ENCODE measurements at regions of chr17 and their contacts with region 1.

Region 1: GRCh38 chr17:19766422-19767270 is 18.5 kb upstream of the ALDH3A1 start:
- DNase-seq: peak; percentile 77 to 84
- ATAC-seq: peak; percentile 89 to 95 (median 90)
- H3K4me3 ChIP-seq: no peak overlapping the region
- H3K27ac ChIP-seq: peak overlapping the region in 1 of 10 donors; percentile 3
- H3K4me1 ChIP-seq: peaks cover 0 to 11% (median 0%) of the 10 kb centered on the region in 9 donors
- H3K27me3 ChIP-seq: no peaks in the 10 kb centered on the region
- CTCF ChIP-seq: peak; percentile 80 to 99 (median 98)

Region 2: DNA sequence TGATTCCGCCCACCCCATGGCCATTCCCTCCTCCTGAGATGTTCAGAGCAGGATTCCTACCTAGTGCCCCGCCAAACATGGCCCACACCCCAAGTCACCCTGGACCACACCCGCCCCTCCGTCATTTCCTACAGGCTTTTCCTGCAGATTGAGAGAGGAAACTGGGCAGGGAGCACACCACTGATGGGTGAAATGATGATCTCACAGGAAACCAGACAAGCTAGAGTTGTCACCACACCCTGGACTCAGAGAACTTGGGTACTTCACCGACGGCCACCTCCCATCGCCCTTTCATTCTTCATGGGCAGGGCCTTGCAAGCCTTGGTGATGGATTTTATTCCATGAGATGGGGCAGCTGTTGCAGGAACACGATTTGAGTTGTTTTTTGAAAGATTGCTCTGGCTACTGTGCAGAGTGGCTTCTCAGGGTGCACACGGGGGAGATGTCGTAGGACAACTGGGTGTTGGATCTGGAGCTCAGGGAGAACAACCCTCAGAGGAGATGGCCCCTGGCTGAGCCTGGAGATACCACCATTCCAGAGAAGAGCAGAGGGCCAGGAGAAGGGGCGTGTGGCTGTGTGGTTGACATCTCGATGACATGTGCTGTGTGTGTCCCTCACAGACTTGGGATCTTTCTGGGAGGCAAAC is 396.7 kb before region 1 on chr17:
- intact Hi-C with region 1: loop called in 4 of 10 experiments (anchors 5 to 10 kb)
- DNase-seq: peak in 1 of 2 donors; percentile 54
- ATAC-seq: peak; percentile 39 to 83 (median 66)
- H3K4me3 ChIP-seq: no peak overlapping the region
- H3K27ac ChIP-seq: peak overlapping the region; percentile 0 to 82 (median 64)
- H3K4me1 ChIP-seq: peaks cover 4 to 51% (median 19%) of the 10 kb centered on the region in 9 donors
- H3K27me3 ChIP-seq: no peaks in the 10 kb centered on the region
- CTCF ChIP-seq: no peak

Region 3: GRCh38 chr17:19513897-19514488 is 252.7 kb before region 1 on chr17:
- intact Hi-C with region 1: loop called (anchors 1 to 5 kb)
- DNase-seq: peak; percentile 52 to 68
- ATAC-seq: peak; percentile 24 to 87 (median 80)
- H3K4me3 ChIP-seq: peak overlapping the region in 4 of 10 donors; percentile 14 to 33 (median 17)
- H3K27ac ChIP-seq: peak overlapping the region in 9 of 10 donors; percentile 13 to 78 (median 53)
- H3K4me1 ChIP-seq: peaks cover 0 to 17% (median 6%) of the 10 kb centered on the region in 9 donors
- H3K27me3 ChIP-seq: no peaks in the 10 kb centered on the region
- CTCF ChIP-seq: peak; percentile 80 to 97 (median 93)

Region 4: GRCh38 chr17:19706791-19707727 is 59.6 kb before region 1 on chr17:
- intact Hi-C with region 1: loop called in 1 of 10 experiments (anchors 10 kb)
- DNase-seq: no peak
- ATAC-seq: peak in 1 of 8 donors; percentile 10
- H3K4me3 ChIP-seq: no peak overlapping the region
- H3K27ac ChIP-seq: no peak overlapping the region
- H3K4me1 ChIP-seq: peaks cover 0 to 28% (median 20%) of the 10 kb centered on the region in 9 donors
- H3K27me3 ChIP-seq: no peaks in the 10 kb centered on the region
- CTCF ChIP-seq: no peak

Region 5: DNA sequence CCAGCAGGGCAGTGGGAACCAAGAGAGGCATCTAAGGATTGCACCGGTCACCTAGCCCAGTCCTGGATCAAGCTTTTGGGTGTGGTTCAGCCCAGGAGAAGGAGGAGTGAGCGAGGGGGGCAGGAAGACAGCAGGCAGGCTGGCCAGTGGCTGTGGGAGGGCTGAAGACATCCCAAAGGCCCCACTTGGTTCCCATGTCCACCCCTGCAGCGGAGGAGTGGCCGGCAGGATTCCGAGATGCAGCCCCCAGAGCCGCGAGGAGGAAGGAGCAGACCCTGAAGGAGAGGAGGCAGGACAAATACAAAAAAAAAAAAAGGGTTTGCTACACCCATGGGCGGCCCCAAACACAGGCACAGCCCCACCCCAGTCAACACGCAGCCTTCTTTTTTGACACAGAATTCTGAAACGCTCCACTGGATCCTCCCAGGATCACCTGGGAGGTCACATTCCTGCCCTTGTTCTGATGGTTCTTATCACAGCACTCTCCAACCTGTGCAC is 49.2 kb before region 1 on chr17:
- intact Hi-C with region 1: no loop called
- DNase-seq: no peak
- ATAC-seq: no peak
- H3K4me3 ChIP-seq: no peak overlapping the region
- H3K27ac ChIP-seq: no peak overlapping the region
- H3K4me1 ChIP-seq: peaks cover 0 to 10% (median 6%) of the 10 kb centered on the region in 9 donors
- H3K27me3 ChIP-seq: no peaks in the 10 kb centered on the region
- CTCF ChIP-seq: no peak

Region 6: GRCh38 chr17:19883537-19884215 is 117.0 kb after region 1 on chr17:
- intact Hi-C with region 1: no loop called
- DNase-seq: no peak
- ATAC-seq: peak in 5 of 8 donors; percentile 49 to 67 (median 52)
- H3K4me3 ChIP-seq: no peak overlapping the region
- H3K27ac ChIP-seq: no peak overlapping the region
- H3K4me1 ChIP-seq: peaks cover 0 to 3% (median 0%) of the 10 kb centered on the region in 9 donors
- H3K27me3 ChIP-seq: peaks cover 0 to 4% (median 0%) of the 10 kb centered on the region in 7 donors
- CTCF ChIP-seq: no peak

Measured in heart right ventricle (tissue), 16 donors.